ENCODE measurements at regions of chr1 and their contacts with region 1.

Region 1: GRCh38 chr1:203273206-203273868 is 32.0 kb upstream of the BTG2 start:
- DNase-seq: peak; percentile 86 to 98 (median 93)
- ATAC-seq: peak; percentile 85 to 87 (median 86)
- H3K4me3 ChIP-seq: peak overlapping the region in 2 of 4 donors; percentile 10 to 40
- H3K27ac ChIP-seq: peak overlapping the region in 2 of 4 donors; percentile 50 to 62
- H3K4me1 ChIP-seq: peaks cover 4 to 23% (median 8%) of the 10 kb centered on the region in 3 donors
- H3K27me3 ChIP-seq: no peaks in the 10 kb centered on the region
- CTCF ChIP-seq: peak; percentile 94 to 97 (median 96)

Region 2: DNA sequence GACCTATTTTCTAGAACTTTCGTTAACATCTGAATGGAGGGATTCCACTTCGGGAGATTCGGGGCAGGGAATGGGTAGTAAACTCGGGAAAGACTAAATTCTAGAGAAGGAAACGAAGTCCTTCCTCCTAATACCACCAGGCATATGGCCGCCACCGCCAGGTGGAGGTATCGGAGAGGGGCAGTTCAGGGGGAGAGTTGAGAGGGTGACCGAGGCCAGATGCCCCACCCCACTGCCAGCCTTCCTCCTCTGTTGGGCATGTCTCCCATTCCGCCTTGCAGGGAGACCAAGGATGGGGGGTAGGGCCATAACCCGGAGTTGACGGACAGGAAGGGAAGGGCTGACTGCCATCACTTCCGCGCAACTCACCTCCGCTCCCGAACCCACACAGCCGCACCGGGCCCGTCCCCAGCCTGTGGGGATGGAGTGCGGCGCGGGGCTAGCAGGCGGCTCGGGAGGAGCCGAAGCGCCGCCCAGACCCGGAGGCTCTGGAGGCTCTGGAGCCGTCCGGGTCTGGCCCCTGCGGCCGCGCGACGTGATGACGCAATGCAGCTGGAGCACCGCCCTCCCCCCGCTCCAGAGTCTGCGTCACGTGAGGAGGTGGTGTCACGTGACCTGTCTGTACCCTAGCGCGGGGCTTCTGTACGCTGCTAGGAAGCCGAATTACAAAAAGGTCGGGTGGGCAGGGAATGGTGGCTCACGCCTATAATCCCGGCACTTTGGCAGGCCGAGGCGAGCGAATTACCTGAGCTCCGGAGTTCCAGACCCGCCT is 346.4 kb before region 1 on chr1 and contains the start of gene KLHL12:
- intact Hi-C with region 1: no loop called
- DNase-seq: peak; percentile 95 to 99 (median 97)
- ATAC-seq: peak; percentile 96 to 99 (median 98)
- H3K4me3 ChIP-seq: peak within 1 kb of the TSS; percentile 53 to 91 (median 62)
- H3K27ac ChIP-seq: peak within 1 kb of the TSS; percentile 92 to 97 (median 94)
- H3K4me1 ChIP-seq: peaks cover 0 to 10% (median 8%) of the 10 kb centered on the region in 3 donors
- H3K27me3 ChIP-seq: no peaks in the 10 kb centered on the region
- CTCF ChIP-seq: peak; percentile 13 to 34 (median 24)
- total RNA-seq, gene KLHL12: 10.2 to 17.8 (median 11.7) TPM

Region 3: DNA sequence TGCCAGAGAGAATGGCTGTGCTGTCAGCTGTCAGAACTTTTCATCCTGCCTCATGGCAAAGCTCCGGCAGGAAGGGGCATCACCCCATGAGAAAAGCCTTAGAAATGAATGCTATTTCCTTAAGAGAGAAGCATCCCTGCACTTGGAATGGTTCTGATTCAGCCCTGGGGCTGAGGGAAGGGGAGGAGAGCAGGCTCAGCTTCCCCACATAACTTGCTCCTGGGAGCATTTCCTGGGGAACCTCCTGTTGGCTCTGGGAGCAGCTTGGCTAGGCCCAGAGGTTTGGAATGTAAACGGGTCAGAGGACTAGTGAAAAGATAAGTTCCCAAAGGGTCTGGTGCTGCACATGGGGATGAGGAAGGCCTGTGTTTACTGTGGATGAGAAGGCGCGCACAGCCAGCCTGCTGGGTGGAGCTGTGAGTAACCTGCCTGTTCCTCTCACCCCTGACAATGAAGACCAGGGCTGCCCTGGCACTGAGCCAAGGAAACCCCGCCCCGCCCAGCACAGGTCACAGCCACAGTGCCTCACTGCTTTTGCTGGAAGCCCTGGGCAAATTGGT is 207.3 kb after region 1 on chr1:
- intact Hi-C with region 1: loop called in 2 of 3 experiments (anchors 5 kb)
- DNase-seq: peak in 3 of 6 donors; percentile 29 to 85 (median 84)
- ATAC-seq: peak; percentile 41 to 77 (median 68)
- H3K4me3 ChIP-seq: no peak overlapping the region
- H3K27ac ChIP-seq: peak overlapping the region in 1 of 4 donors; percentile 46
- H3K4me1 ChIP-seq: no peaks in the 10 kb centered on the region
- H3K27me3 ChIP-seq: no peaks in the 10 kb centered on the region
- CTCF ChIP-seq: no peak

Region 4: DNA sequence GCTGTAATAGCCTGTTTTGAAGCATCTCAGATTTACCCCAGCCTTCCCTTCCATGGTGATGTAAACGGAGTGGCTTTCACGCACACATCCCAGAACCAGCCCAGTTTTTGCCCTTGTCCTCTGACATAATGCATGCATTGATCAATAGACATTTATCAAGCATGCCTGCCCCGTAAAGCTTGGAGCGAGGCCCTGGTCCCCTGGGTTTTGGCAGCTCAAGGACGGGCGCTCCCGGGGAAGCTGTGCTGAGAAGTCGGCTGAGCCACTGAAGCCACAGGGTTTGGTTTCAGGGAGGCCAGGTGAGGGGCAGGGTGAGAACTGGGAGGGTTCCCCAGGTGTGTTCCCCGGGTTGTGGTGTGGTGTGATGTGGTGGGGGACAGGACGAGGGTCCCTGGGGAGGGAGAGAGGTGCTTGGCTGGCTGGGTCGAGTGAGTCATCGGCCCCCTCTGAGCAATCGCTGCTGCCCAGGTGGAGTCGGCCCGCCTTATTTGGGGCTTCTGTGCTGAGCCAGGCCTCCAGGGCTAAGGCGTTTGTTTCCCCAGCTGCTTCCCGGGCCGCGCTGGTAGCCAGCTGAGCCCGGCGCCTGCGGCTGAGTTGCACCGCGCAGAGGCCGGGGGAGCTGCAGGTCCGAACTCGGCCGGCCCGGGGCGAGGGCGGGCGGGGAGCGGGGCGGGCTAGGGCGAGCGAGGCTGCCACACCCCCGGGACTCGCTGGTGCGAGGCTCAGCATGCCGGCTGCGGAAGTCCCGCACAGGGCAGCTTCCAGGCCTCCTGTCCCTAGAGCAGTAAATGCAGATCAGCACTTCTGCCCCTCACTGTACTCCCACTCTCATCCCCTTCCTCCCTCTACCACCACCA is 376.9 kb after region 1 on chr1:
- intact Hi-C with region 1: no loop called
- DNase-seq: peak; percentile 86 to 92 (median 89)
- ATAC-seq: peak; percentile 91 to 95 (median 92)
- H3K4me3 ChIP-seq: peak overlapping the region in 2 of 4 donors; percentile 18 to 29
- H3K27ac ChIP-seq: peak overlapping the region; percentile 83 to 92 (median 88)
- H3K4me1 ChIP-seq: peaks cover 0 to 21% (median 14%) of the 10 kb centered on the region in 3 donors
- H3K27me3 ChIP-seq: no peaks in the 10 kb centered on the region
- CTCF ChIP-seq: no peak

Measured in pancreas (tissue), 10 donors.